Psoas muscle (tissue), 8 donors: ENCODE measurements at regions of chr3 and their contacts with region 1.

Region 1: DNA sequence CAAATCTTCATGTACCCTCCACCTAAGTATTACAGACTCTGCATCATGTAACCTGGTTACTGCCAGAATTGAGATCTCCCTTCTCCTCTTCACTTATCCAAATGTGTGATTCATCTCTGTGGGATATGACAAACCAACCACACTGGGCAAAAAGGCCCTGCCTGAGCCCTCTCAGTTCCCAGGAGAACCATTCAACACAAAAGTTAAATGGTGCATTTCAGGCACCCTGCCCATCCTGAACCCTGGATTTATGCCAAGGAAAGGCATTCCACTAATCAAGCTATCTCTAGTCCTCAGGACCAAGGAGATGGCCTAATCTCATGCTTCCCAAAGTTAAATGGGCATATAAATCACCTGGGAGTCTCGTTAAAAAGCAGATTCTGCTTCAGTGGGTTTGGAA is 108.5 kb downstream of the TNIK start:
- DNase-seq: peak in 1 of 2 donors; percentile 29
- ATAC-seq: peak; percentile 68 to 86 (median 75)
- H3K4me3 ChIP-seq: no peak overlapping the region
- H3K27ac ChIP-seq: peak overlapping the region; percentile 50
- H3K4me1 ChIP-seq: peaks cover 50% of the 10 kb centered on the region
- H3K27me3 ChIP-seq: no peaks in the 10 kb centered on the region
- CTCF ChIP-seq: no peak

Region 2: GRCh38 chr3:171282041-171282440 is 69.6 kb before region 1 on chr3:
- intact Hi-C with region 1: no loop called
- DNase-seq: no peak
- ATAC-seq: peak in 1 of 4 donors; percentile 45
- H3K4me3 ChIP-seq: peak overlapping the region; percentile 43
- H3K27ac ChIP-seq: peak overlapping the region; percentile 90
- H3K4me1 ChIP-seq: peaks cover 55% of the 10 kb centered on the region
- H3K27me3 ChIP-seq: no peaks in the 10 kb centered on the region
- CTCF ChIP-seq: no peak

Region 3: GRCh38 chr3:171417813-171418212 is 66.1 kb after region 1 on chr3:
- intact Hi-C with region 1: loop called in 1 of 2 experiments (anchors 10 kb)
- DNase-seq: peak in 1 of 2 donors; percentile 44
- ATAC-seq: peak; percentile 86 to 91 (median 88)
- H3K4me3 ChIP-seq: no peak overlapping the region
- H3K27ac ChIP-seq: peak overlapping the region; percentile 72
- H3K4me1 ChIP-seq: peaks cover 42% of the 10 kb centered on the region
- H3K27me3 ChIP-seq: no peaks in the 10 kb centered on the region
- CTCF ChIP-seq: no peak